Ascending aorta (tissue), 2 donors: ENCODE measurements at regions of chr16 and their contacts with region 1.

Region 1: GRCh38 chr16:89241187-89242007 is 23.9 kb downstream of the ZNF778 start:
- DNase-seq: peak in 1 of 2 donors; percentile 87
- H3K4me3 ChIP-seq: peak overlapping the region; percentile 70 to 79
- H3K27ac ChIP-seq: peak overlapping the region; percentile 95 to 98
- H3K4me1 ChIP-seq: peaks cover 0 to 6% of the 10 kb centered on the region in 2 donors
- H3K27me3 ChIP-seq: no peaks in the 10 kb centered on the region
- CTCF ChIP-seq: no peak

Region 2: DNA sequence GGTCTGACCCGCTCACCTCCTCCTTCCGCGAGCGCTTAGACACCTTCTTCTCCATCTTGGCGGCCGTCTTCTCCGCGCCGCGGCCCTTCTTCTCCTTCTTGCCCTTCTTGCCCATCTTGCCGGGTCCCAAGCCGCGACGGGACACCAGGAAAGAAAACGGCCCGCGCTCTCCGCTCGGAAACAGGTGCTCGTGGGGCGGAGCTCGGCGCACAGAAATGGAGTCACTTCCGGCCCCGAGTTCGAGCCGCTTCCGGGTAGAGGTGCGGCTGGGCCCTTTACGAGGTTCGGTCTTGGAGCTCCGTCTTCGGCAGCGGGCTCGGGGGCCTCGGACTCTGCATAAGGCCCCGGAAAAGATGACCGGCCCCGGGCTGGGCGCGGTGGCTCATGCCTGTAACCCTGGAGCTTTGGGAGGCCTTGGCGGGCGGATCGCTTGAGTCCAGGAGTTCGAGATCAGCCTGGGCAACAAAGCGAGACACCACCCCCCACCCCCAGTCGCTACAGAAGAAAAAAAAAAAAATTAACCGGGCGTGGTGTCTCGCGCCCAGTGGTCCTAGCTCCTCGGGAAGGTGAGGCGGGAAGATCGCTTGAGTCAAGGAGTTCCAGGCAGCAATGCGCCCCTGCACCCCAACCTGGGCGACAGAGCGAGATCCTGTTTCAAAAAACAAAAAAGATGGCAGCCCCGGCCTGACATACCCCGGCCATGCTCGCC is 1475.5 kb before region 1 on chr16 and contains the start of gene KLHDC4:
- intact Hi-C with region 1: loop called (anchors 10 kb)
- DNase-seq: peak; percentile 57 to 94
- H3K4me3 ChIP-seq: peak within 1 kb of the TSS; percentile 72 to 81
- H3K27ac ChIP-seq: peak within 1 kb of the TSS; percentile 81 to 86
- H3K4me1 ChIP-seq: peaks cover 8 to 9% of the 10 kb centered on the region in 2 donors
- H3K27me3 ChIP-seq: no peaks in the 10 kb centered on the region
- CTCF ChIP-seq: no peak
- total RNA-seq, gene KLHDC4: 38.4 TPM

Region 3: GRCh38 chr16:89217388-89218191 is 23.8 kb before region 1 on chr16 and contains the start of gene ZNF778:
- intact Hi-C with region 1: loop called (anchors 2 kb)
- DNase-seq: peak; percentile 21 to 90
- H3K4me3 ChIP-seq: peak within 1 kb of the TSS; percentile 75 to 83
- H3K27ac ChIP-seq: peak within 1 kb of the TSS; percentile 91 to 96
- H3K4me1 ChIP-seq: peaks cover 7 to 21% of the 10 kb centered on the region in 2 donors
- H3K27me3 ChIP-seq: no peaks in the 10 kb centered on the region
- CTCF ChIP-seq: peak in 1 of 3 experiments; percentile 5
- total RNA-seq, gene ZNF778: 1.5 TPM

Region 4: GRCh38 chr16:89395141-89395874 is 153.9 kb after region 1 on chr16:
- intact Hi-C with region 1: loop called (anchors 10 kb)
- DNase-seq: peak; percentile 34 to 96
- H3K4me3 ChIP-seq: no peak overlapping the region
- H3K27ac ChIP-seq: peak overlapping the region; percentile 47 to 51
- H3K4me1 ChIP-seq: peaks cover 0 to 22% of the 10 kb centered on the region in 2 donors
- H3K27me3 ChIP-seq: no peaks in the 10 kb centered on the region
- CTCF ChIP-seq: no peak

Region 5: DNA sequence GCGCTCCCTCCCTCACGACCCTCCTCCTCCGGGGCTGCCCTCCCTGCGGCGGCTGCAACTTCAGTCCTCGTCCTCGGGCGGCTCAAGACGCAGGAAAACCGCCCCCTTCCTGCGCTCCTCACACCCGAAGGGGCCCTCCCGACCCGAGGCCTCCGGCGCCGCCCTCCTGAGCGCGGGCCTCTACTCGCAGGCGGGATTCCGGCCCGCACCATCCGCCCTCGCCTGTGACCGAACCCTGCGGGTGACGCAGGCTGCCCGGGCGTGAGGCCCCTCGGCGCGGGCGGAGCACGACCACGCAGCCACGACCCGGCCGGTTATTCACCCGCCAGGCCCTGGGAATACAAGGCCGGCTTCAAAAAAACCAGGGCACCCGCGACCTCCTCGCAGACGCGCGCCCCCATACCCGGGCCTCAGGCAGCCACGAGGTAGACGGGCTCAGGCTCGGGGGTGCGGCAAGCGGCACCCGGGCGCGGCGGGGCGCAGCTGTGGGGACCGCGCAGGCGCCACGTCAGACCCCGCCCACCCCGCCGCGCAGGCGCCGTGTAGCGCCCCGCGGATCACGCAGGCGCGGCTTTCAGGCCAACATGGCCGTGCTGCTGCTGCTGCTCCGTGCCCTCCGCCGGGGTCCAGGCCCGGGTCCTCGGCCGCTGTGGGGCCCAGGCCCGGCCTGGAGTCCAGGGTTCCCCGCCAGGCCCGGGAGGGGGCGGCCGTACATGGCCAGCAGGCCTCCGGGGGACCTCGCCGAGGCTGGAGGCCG is 266.6 kb after region 1 on chr16 and contains the start of gene SPG7:
- intact Hi-C with region 1: loop called (anchors 5 kb)
- DNase-seq: peak; percentile 19 to 87
- H3K4me3 ChIP-seq: peak within 1 kb of the TSS; percentile 66 to 97
- H3K27ac ChIP-seq: peak within 1 kb of the TSS; percentile 94 to 96
- H3K4me1 ChIP-seq: peaks cover 8 to 24% of the 10 kb centered on the region in 2 donors
- H3K27me3 ChIP-seq: no peaks in the 10 kb centered on the region
- CTCF ChIP-seq: no peak
- total RNA-seq, gene SPG7: 108 TPM

Region 6: DNA sequence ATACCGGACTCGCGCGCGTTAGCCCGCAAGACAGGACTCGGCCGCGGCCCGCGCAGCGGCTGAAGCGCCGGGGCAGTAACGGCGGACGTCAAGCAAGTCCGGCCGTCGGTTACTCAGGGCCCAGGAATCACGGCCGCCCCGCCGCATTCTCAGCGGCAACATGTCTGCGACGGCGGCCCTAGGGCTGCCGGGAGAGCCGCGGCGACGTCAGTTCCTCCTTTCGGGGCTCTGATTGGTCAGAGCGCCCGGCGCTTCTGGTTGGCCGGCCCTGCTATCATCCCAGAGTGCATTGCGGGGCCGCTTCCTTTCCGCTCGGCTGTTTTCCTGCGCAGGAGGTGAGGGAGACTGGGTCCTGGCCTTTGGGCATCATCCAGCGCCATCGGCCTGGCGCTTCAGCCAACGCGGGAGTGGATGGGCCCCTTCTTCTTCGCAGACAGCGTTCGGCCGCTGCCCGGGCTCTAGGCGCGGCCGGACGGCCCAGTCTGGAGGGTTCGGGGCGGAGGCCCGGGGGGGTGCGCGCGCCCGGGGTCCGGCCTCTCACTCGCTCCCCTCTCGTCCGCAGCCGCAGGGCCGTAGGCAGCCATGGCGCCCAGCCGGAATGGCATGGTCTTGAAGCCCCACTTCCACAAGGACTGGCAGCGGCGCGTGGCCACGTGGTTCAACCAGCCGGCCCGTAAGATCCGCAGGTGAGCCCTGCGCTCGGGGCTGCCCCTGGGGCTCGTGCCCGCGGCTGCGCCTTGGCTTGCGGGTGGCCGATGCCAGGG is 319.2 kb after region 1 on chr16 and contains the start of gene RPL13:
- intact Hi-C with region 1: loop called (anchors 1 kb)
- DNase-seq: peak; percentile 82 to 98
- H3K4me3 ChIP-seq: peak within 1 kb of the TSS; percentile 66 to 74
- H3K27ac ChIP-seq: peak within 1 kb of the TSS; percentile 95 to 96
- H3K4me1 ChIP-seq: peaks cover 17% of the 10 kb centered on the region in 2 donors
- H3K27me3 ChIP-seq: no peaks in the 10 kb centered on the region
- CTCF ChIP-seq: no peak
- total RNA-seq, gene RPL13: 8,360 TPM

Region 7: GRCh38 chr16:89686520-89687091 is 445.2 kb after region 1 on chr16 and contains the start of gene CDK10:
- intact Hi-C with region 1: loop called (anchors 10 kb)
- DNase-seq: peak; percentile 42 to 93
- H3K4me3 ChIP-seq: peak within 1 kb of the TSS; percentile 63 to 80
- H3K27ac ChIP-seq: peak within 1 kb of the TSS; percentile 58 to 82
- H3K4me1 ChIP-seq: peaks cover 4 to 5% of the 10 kb centered on the region in 2 donors
- H3K27me3 ChIP-seq: no peaks in the 10 kb centered on the region
- CTCF ChIP-seq: peak in 1 of 3 experiments; percentile 6
- total RNA-seq, gene CDK10: 141 TPM